H1 (cell line): ENCODE measurements at regions of chr4 and their contacts with region 1.

Region 1: GRCh38 chr4:4677556-4678522 is 136.0 kb upstream of the STX18 start:
- DNase-seq: peak in 1 of 2 experiments; percentile 70
- H3K4me3 ChIP-seq: peak overlapping the region in 1 of 4 experiments; percentile 11; a peak in 4 of 8 replicates
- H3K27ac ChIP-seq: no peak overlapping the region
- H3K4me1 ChIP-seq: peaks cover 0 to 11% (median 6%) of the 10 kb centered on the region in 4 experiments; a peak in 5 of 7 replicates
- H3K27me3 ChIP-seq: peaks cover 0 to 9% (median 2%) of the 10 kb centered on the region in 4 experiments; a peak in 4 of 7 replicates
- CTCF ChIP-seq: peak; percentile 75 to 93 (median 80)
- EP300 ChIP-seq: no peak
- POLR2A ChIP-seq: no peak
- RAD21 ChIP-seq: peak; percentile 88 to 91

Region 2: DNA sequence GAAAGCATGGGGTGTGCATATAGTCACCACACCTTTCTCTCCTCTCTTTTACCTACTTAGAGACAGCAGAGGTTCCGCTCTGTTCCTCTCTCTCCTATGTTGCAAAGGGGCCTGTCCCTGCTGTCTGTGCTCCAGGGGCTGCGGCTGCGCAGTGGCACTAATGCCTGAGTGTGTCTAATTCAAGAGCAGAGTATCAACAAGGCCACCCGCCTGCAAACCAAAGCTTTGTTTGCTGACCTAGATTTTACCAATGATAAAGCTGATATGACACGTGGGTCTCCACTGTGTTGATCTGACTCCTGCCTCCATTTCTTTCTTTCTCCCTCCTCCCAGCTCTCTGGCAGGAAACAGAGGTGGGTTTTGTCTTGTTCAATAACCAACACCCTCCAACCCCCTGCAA is 216.0 kb before region 1 on chr4:
- CTCF ChIA-PET with region 1: no interaction called
- POLR2A ChIA-PET with region 1: no interaction called
- DNase-seq: no peak
- H3K4me3 ChIP-seq: no peak overlapping the region
- H3K27ac ChIP-seq: no peak overlapping the region
- H3K4me1 ChIP-seq: peaks cover 4 to 23% (median 15%) of the 10 kb centered on the region in 4 experiments; a peak in 5 of 7 replicates
- H3K27me3 ChIP-seq: no peaks in the 10 kb centered on the region
- CTCF ChIP-seq: no peak
- EP300 ChIP-seq: no peak
- POLR2A ChIP-seq: no peak
- RAD21 ChIP-seq: no peak

Region 3: DNA sequence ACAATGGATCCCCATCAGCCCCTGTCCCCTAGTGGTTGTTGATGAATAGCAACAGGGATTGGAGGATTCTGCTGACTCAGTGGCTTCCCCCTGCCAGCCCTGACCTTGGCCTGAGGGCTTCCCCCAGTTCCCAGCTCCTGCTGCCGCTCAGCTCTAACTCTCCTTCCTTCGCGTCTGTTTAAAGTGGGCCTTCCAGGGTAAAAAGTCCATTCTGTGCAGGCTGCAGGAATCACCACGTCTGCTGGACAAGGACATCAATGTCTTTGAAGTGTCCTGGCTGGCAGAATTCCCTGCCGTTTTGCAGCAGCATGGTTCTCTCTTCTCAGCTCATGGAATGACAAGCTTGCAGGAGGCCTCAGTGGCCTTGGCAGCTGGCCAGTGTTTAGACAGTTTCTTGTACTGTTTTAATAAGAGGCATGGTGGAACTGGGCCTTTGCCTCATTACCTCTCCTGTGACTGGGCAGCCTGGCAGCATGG is 16.5 kb after region 1 on chr4:
- CTCF ChIA-PET with region 1: interaction called, 32 read pairs
- POLR2A ChIA-PET with region 1: interaction called, 5 read pairs
- DNase-seq: peak; percentile 21 to 61
- H3K4me3 ChIP-seq: no peak overlapping the region
- H3K27ac ChIP-seq: no peak overlapping the region
- H3K4me1 ChIP-seq: peaks cover 3 to 9% (median 6%) of the 10 kb centered on the region in 4 experiments; a peak in 5 of 7 replicates
- H3K27me3 ChIP-seq: peaks cover 0 to 3% (median 2%) of the 10 kb centered on the region in 4 experiments; a peak in 1 of 7 replicates
- CTCF ChIP-seq: peak; percentile 46 to 71 (median 51); a peak in 3 of 4 replicates
- EP300 ChIP-seq: no peak
- POLR2A ChIP-seq: no peak
- RAD21 ChIP-seq: peak; percentile 31 to 52

Region 4: GRCh38 chr4:4752576-4753401 is 75.0 kb after region 1 on chr4:
- CTCF ChIA-PET with region 1: interaction called, 10 read pairs
- POLR2A ChIA-PET with region 1: no interaction called
- DNase-seq: no peak
- H3K4me3 ChIP-seq: no peak overlapping the region
- H3K27ac ChIP-seq: no peak overlapping the region
- H3K4me1 ChIP-seq: peaks cover 0 to 5% (median 0%) of the 10 kb centered on the region in 4 experiments; a peak in 1 of 7 replicates
- H3K27me3 ChIP-seq: peaks cover 0 to 4% (median 0%) of the 10 kb centered on the region in 4 experiments; a peak in 1 of 7 replicates
- CTCF ChIP-seq: no peak
- EP300 ChIP-seq: no peak
- POLR2A ChIP-seq: no peak
- RAD21 ChIP-seq: no peak

Region 5: GRCh38 chr4:4838051-4838935 is 160.5 kb after region 1 on chr4:
- CTCF ChIA-PET with region 1: interaction called, 31 read pairs
- POLR2A ChIA-PET with region 1: no interaction called
- DNase-seq: no peak
- H3K4me3 ChIP-seq: no peak overlapping the region
- H3K27ac ChIP-seq: no peak overlapping the region
- H3K4me1 ChIP-seq: peaks cover 0 to 3% (median 0%) of the 10 kb centered on the region in 4 experiments; a peak in 2 of 7 replicates
- H3K27me3 ChIP-seq: peaks cover 0 to 7% (median 6%) of the 10 kb centered on the region in 4 experiments; a peak in 3 of 7 replicates
- CTCF ChIP-seq: no peak
- EP300 ChIP-seq: no peak
- POLR2A ChIP-seq: no peak
- RAD21 ChIP-seq: no peak